ENCODE measurements at regions of chr18 and their contacts with region 1.

Region 1: GRCh38 chr18:27605107-27605834 is 420.2 kb upstream of the CHST9 start:
- DNase-seq: peak; percentile 54
- H3K4me3 ChIP-seq: no peak overlapping the region
- H3K27ac ChIP-seq: no peak overlapping the region
- H3K4me1 ChIP-seq: no peaks in the 10 kb centered on the region
- H3K27me3 ChIP-seq: no peaks in the 10 kb centered on the region
- CTCF ChIP-seq: peak; percentile 87 to 95

Region 2: DNA sequence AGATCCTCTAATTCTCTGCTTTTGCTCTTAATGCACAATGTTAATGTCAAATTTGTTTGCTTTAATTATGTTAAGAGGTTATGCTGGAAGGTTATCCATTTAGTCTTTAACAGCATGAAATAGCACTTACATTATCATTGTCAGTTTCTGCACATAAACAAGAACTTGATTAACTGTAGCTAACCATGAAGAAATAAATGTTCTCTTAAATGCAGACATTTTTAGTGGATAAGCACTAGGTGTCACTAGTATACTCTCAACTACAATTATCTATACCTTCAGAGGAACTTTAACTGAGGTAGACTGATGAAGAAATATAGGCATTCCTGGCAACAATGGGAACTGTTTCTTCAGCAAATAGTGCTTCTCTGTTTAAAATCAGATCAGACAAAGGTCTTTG is 241.4 kb before region 1 on chr18:
- CTCF ChIA-PET with region 1: interaction called, 6 read pairs
- dilution Hi-C with region 1: no loop called
- in situ Hi-C with region 1: loop called in 1 of 2 experiments (anchors 10 kb)
- intact Hi-C with region 1: no loop called
- DNase-seq: no peak
- H3K4me3 ChIP-seq: no peak overlapping the region
- H3K27ac ChIP-seq: no peak overlapping the region
- H3K4me1 ChIP-seq: no peaks in the 10 kb centered on the region
- H3K27me3 ChIP-seq: peaks cover 2% of the 10 kb centered on the region
- CTCF ChIP-seq: peak; percentile 18 to 56

Region 3: GRCh38 chr18:27378431-27379095 is 226.7 kb before region 1 on chr18:
- CTCF ChIA-PET with region 1: interaction called, 10 read pairs
- dilution Hi-C with region 1: no loop called
- in situ Hi-C with region 1: no loop called
- intact Hi-C with region 1: no loop called
- DNase-seq: peak; percentile 98
- H3K4me3 ChIP-seq: no peak overlapping the region
- H3K27ac ChIP-seq: peak overlapping the region; percentile 91
- H3K4me1 ChIP-seq: peaks cover 19% of the 10 kb centered on the region
- H3K27me3 ChIP-seq: no peaks in the 10 kb centered on the region
- CTCF ChIP-seq: no peak

Region 4: GRCh38 chr18:27685807-27686412 is 80.6 kb after region 1 on chr18:
- CTCF ChIA-PET with region 1: no interaction called
- dilution Hi-C with region 1: no loop called
- in situ Hi-C with region 1: no loop called
- intact Hi-C with region 1: loop called (anchors 5 kb)
- DNase-seq: peak; percentile 26
- H3K4me3 ChIP-seq: no peak overlapping the region
- H3K27ac ChIP-seq: no peak overlapping the region
- H3K4me1 ChIP-seq: no peaks in the 10 kb centered on the region
- H3K27me3 ChIP-seq: no peaks in the 10 kb centered on the region
- CTCF ChIP-seq: peak; percentile 77 to 80

Region 5: DNA sequence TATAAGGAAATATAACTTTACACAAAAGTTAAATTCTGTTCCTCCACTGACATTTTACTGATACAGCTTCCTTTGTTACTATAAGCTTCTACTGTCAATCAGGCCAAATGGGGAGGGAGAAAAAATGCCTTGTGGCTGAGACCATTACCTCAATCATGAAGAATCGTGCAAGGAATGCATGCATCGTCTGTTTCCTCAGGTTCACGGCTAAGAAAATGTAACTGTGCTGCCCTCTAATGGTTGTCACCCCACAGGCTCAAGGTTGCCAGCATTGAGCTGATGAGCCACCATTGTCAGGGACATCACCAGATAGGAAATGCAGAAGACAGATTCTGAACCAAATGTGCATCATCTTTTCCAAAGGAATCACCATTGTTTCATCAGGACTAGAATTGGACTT is 144.7 kb after region 1 on chr18:
- CTCF ChIA-PET with region 1: interaction called, 14 read pairs
- dilution Hi-C with region 1: no loop called
- in situ Hi-C with region 1: no loop called
- intact Hi-C with region 1: loop called (anchors 1 kb)
- DNase-seq: peak; percentile 40
- H3K4me3 ChIP-seq: no peak overlapping the region
- H3K27ac ChIP-seq: no peak overlapping the region
- H3K4me1 ChIP-seq: no peaks in the 10 kb centered on the region
- H3K27me3 ChIP-seq: no peaks in the 10 kb centered on the region
- CTCF ChIP-seq: peak; percentile 71 to 74

Region 6: DNA sequence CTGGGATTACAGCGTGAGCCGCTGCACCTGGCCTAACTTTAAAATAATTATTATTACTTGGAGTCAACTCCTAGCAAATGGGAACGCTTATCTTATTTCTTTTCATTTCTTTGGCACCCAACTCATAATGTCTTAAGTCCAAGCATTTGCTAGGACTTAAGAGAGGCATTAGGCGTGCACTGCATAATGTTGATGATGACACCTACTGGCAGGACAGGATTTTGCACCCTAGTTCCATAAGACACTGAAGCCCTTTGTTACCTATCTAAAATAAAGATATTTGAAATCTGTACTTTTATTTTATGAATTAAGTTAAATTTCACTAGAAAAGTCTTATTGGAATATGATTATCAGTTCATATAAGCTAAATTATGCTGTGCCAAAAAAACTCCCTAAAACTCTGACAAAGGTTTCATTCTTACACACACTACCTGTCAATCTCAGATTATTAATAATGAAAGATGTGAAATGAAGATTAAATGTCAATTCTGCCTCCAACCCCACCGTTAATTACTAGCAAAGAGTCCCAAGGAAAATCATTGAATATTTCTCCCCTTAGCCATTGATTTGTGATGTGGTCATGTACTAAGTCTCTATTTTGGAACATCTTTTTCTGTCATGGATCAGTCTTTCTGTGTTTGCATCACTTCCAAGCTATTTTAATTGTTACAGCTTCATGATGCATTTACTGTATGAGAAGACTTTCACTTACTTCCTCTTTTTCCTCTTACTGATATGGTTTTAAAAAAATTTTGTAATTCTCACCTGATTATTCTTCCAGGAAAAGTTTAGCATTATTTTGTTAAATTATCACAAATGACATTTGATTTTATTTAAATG is 584.3 kb after region 1 on chr18:
- CTCF ChIA-PET with region 1: no interaction called
- dilution Hi-C with region 1: no loop called
- in situ Hi-C with region 1: no loop called
- intact Hi-C with region 1: loop called (anchors 2 kb)
- DNase-seq: peak; percentile 51
- H3K4me3 ChIP-seq: no peak overlapping the region
- H3K27ac ChIP-seq: no peak overlapping the region
- H3K4me1 ChIP-seq: no peaks in the 10 kb centered on the region
- H3K27me3 ChIP-seq: no peaks in the 10 kb centered on the region
- CTCF ChIP-seq: peak; percentile 83 to 86

Measured in mammary epithelial cell (primary cell).